BJ (cell line): ENCODE measurements at regions of chr2 and their contacts with region 1.

Region 1: DNA sequence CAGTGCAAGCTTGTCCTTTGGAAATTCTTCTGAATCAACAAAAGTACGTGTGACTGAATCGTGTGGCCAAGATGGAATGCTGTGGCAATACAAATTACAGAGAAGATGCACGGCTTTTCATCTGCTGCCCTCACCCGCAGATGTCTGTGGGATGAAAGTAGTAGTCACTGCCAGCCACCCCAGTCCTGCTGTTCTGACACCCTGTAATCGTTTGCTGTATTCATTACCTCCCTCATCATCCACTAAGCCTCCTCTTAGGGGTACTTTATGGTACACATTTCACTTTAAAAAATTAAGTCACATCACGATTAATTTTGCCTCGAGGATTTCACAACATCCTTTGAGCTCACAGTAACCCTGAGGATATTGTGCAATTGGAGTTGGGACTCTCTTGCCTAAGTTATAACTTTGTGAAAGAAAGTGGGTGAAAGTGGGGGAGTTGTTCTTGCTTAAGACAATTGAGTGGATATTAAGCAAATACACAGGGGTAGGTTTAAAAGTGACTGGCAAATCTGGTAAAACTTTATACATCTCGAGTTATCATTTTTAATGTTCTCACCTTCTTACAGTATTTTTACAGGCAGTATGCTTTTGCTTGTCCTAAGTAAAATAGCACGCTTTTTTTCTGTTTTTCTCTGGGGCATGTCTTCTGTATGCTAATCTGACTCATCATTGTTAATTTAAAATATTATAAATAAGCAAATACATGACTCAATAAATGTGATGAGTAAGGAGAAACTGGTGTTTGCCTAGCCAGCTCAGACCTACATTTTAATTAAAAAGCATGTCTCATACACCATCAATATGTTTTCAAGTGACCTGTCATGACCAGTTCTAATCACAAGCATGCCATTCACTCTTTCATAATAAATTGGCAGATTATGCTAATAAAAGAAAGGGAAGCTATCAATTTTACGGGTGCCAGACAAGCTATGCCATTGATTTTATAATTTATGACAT is 680.9 kb downstream of the IRS1 start:
- DNase-seq: peak; percentile 77
- H3K4me3 ChIP-seq: peak overlapping the region; percentile 30; the same call in 1 of the 2 replicates
- H3K27me3 ChIP-seq: no peaks in the 10 kb centered on the region
- CTCF ChIP-seq: no peak

Region 2: DNA sequence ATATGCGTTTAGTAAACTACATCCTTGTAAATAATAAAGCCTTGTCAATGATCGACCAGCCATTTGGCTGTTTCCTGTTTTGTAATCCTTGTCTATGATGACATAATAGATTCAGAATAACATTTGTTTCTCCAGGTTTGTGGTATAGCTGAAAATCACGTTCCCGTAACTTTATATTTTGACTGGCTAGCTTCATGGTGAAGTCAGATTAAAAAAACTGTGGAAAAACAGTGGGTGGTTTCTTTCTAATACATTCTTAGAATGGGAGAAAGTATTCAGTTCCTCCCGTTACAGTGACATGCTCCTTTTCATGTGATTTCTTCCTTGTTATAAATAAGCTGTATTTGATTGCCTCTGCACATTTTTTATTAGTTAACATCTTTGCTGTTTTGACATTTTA is 352.3 kb before region 1 on chr2:
- CTCF ChIA-PET with region 1: no interaction called
- POLR2A ChIA-PET with region 1: no interaction called
- DNase-seq: no peak
- H3K4me3 ChIP-seq: no peak overlapping the region
- H3K27me3 ChIP-seq: no peaks in the 10 kb centered on the region
- CTCF ChIP-seq: no peak

Region 3: GRCh38 chr2:226185616-226186211 is 67.0 kb after region 1 on chr2:
- CTCF ChIA-PET with region 1: interaction called, 12 read pairs
- POLR2A ChIA-PET with region 1: no interaction called
- DNase-seq: peak; percentile 99
- H3K4me3 ChIP-seq: peak overlapping the region; percentile 21
- H3K27me3 ChIP-seq: no peaks in the 10 kb centered on the region
- CTCF ChIP-seq: no peak